Activated CD8-positive, alpha-beta T cell treated with anti-CD3 and anti-CD28 coated beads for 36 hours (primary cell): ENCODE measurements at regions of chr17 and their contacts with region 1.

Region 1: DNA sequence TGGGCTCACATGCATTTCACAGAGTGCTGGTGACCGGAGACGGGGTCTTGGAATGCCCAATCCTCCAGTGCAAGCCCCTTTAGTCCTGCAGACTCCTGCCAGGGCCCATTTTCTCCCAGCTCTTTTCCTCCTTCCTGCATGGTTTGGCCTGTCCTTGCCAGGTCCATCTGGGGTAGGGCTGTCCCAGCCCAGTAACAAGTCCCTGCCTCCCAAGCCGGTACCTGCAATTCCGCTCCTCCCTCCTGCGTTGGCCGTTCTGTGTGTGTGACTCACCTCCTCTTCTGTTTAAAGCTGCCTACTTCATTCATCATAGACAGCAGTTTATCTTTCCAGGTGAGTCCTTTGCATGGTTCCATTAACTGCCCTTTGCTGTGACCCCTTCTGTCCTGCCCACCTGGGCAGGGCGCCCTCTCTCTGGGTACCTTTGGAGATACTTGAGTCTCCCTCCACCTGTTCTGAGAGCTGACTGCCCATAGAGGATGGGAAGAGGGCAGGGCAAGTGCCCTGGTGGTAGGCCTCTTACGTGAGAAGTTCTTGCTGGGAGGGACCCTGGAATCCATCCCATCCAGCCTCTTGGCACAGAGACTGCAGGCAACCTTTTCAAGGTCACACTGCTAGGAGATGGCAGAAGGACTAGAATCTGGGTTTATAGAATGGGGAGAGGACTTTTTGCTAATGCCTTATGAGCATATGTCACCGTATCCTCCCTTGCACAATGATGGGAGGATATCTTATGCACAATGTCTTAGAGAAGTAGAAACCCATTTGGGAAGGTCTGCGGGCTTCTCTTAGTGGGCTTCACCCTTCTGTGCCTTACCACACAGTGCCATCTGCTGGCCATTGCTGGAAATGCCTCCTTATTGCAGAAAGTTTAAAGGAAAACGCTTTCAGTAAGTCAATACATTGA is 29.7 kb upstream of the LGALS9 start:
- DNase-seq: peak; percentile 89
- ATAC-seq: peak; percentile 53
- H3K4me3 Mint-ChIP-seq: no peak overlapping the region
- H3K27ac Mint-ChIP-seq: no peak overlapping the region
- H3K4me1 Mint-ChIP-seq: peaks cover 5% of the 10 kb centered on the region
- H3K27me3 Mint-ChIP-seq: no peaks in the 10 kb centered on the region
- CTCF ChIP-seq: peak; percentile 85

Region 2: GRCh38 chr17:27236717-27237315 is 364.5 kb before region 1 on chr17:
- CTCF ChIA-PET with region 1: interaction called, 98 read pairs
- POLR2A ChIA-PET with region 1: no interaction called
- intact Hi-C with region 1: loop called (anchors 10 kb)
- DNase-seq: peak; percentile 91
- ATAC-seq: peak; percentile 77
- H3K4me3 Mint-ChIP-seq: no peak overlapping the region
- H3K27ac Mint-ChIP-seq: no peak overlapping the region
- H3K4me1 Mint-ChIP-seq: peaks cover 16% of the 10 kb centered on the region
- H3K27me3 Mint-ChIP-seq: peaks cover 3% of the 10 kb centered on the region
- CTCF ChIP-seq: peak; percentile 83

Region 3: DNA sequence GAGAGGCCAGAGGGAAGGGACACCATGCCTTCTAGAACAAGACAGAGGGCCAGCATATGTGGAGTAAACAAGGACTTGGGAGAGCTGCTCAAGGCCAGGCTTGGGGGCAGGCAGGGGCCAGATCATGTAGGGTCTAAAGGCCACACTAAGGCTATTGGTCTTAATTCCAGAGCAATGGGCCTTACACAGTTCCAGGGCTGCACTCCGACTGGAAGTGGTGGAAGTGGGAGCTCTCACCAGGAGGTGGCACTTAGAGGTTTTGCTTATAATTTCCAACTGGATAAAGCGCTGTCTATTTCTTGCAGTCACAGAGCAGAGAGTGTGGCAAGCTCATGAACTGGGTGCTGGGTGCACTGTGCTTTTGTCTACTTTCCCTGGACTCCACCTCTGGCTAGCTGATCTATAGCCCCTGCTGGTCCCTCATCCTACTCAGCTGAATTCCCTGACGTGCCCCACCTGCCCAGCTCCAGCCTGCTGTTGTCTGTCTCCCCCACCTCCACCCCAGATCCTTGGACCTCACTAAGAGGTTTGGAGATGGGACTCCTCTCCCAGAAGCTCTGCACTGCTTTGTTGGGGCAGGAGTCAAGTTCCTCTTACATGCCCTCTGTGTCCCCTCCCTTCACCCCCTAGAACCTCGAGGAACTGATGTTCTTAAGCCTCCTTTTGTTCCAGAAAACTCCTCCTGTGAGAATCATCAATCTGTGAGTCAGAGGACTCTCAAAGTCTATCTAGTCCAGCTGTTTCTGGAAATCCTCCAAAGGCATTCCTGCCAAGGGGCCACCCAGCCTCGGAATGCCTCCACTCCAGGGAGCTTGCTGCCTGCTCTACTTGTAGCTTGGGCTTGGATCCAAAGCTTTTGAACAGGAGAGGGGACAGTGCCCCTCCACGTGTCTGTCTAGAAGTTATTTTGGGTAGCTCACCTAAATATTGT is 193.1 kb before region 1 on chr17:
- CTCF ChIA-PET with region 1: interaction called, 19 read pairs
- POLR2A ChIA-PET with region 1: no interaction called
- intact Hi-C with region 1: no loop called
- DNase-seq: no peak
- ATAC-seq: no peak
- H3K4me3 Mint-ChIP-seq: no peak overlapping the region
- H3K27ac Mint-ChIP-seq: no peak overlapping the region
- H3K4me1 Mint-ChIP-seq: no peaks in the 10 kb centered on the region
- H3K27me3 Mint-ChIP-seq: peaks cover 10% of the 10 kb centered on the region
- CTCF ChIP-seq: no peak

Region 4: DNA sequence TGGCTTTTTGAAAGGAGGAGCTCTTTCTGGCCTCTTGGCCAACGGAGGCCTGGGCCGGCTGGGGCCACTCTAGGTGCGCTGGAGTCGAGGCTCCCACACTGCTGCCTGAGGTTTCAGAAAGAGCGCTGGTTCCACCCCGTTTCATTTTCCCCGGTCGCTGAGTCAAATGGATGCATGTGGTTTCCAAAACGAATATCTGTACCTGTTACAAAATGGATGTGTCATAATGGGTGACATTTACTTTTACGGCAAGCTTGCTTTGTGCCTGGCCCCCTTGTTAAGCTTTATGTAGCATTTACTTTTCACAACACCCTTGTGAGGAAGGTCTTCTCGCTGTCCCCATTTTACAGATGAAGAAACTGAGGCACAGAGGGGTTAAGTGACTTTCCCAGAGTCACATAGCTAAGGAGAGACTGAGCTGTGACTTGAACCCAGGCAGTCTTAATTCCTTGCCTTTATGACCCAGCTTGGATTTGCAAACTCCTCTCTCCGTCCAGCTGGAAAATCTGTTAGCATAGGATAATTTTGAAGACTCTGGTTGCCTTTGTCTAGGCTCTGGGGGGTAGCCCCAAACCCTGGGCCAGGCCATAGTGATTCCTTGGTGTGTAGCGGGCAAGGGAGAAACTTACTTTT is 134.5 kb before region 1 on chr17:
- CTCF ChIA-PET with region 1: interaction called, 41 read pairs
- POLR2A ChIA-PET with region 1: interaction called, 3 read pairs
- intact Hi-C with region 1: loop called (anchors 5 kb)
- DNase-seq: peak; percentile 92
- ATAC-seq: peak; percentile 84
- H3K4me3 Mint-ChIP-seq: peak overlapping the region; percentile 67
- H3K27ac Mint-ChIP-seq: peak overlapping the region; percentile 96
- H3K4me1 Mint-ChIP-seq: peaks cover 85% of the 10 kb centered on the region
- H3K27me3 Mint-ChIP-seq: no peaks in the 10 kb centered on the region
- CTCF ChIP-seq: no peak

Region 5: GRCh38 chr17:27552469-27552779 is 48.9 kb before region 1 on chr17:
- CTCF ChIA-PET with region 1: interaction called, 11 read pairs
- POLR2A ChIA-PET with region 1: no interaction called
- intact Hi-C with region 1: no loop called
- DNase-seq: peak; percentile 42
- ATAC-seq: peak; percentile 76
- H3K4me3 Mint-ChIP-seq: no peak overlapping the region
- H3K27ac Mint-ChIP-seq: no peak overlapping the region
- H3K4me1 Mint-ChIP-seq: peaks cover 25% of the 10 kb centered on the region
- H3K27me3 Mint-ChIP-seq: no peaks in the 10 kb centered on the region
- CTCF ChIP-seq: no peak

Region 6: GRCh38 chr17:27578718-27579085 is 22.6 kb before region 1 on chr17:
- CTCF ChIA-PET with region 1: interaction called, 40 read pairs
- POLR2A ChIA-PET with region 1: interaction called, 6 read pairs
- intact Hi-C with region 1: no loop called
- DNase-seq: peak; percentile 92
- ATAC-seq: peak; percentile 78
- H3K4me3 Mint-ChIP-seq: peak overlapping the region; percentile 40
- H3K27ac Mint-ChIP-seq: peak overlapping the region; percentile 87
- H3K4me1 Mint-ChIP-seq: peaks cover 64% of the 10 kb centered on the region
- H3K27me3 Mint-ChIP-seq: no peaks in the 10 kb centered on the region
- CTCF ChIP-seq: no peak

Region 7: GRCh38 chr17:27630607-27631410 is 29.5 kb after region 1 on chr17 and contains the start of gene LGALS9:
- CTCF ChIA-PET with region 1: interaction called, 18 read pairs
- POLR2A ChIA-PET with region 1: no interaction called
- intact Hi-C with region 1: no loop called
- DNase-seq: peak; percentile 48
- ATAC-seq: peak; percentile 79
- H3K4me3 Mint-ChIP-seq: peak within 1 kb of the TSS; percentile 60
- H3K27ac Mint-ChIP-seq: peak within 1 kb of the TSS; percentile 79
- H3K4me1 Mint-ChIP-seq: peaks cover 27% of the 10 kb centered on the region
- H3K27me3 Mint-ChIP-seq: no peaks in the 10 kb centered on the region
- CTCF ChIP-seq: no peak
- total RNA-seq, gene LGALS9: 17.3 to 18.4 TPM